ENCODE measurements at regions of chr22 and their contacts with region 1.

Region 1: DNA sequence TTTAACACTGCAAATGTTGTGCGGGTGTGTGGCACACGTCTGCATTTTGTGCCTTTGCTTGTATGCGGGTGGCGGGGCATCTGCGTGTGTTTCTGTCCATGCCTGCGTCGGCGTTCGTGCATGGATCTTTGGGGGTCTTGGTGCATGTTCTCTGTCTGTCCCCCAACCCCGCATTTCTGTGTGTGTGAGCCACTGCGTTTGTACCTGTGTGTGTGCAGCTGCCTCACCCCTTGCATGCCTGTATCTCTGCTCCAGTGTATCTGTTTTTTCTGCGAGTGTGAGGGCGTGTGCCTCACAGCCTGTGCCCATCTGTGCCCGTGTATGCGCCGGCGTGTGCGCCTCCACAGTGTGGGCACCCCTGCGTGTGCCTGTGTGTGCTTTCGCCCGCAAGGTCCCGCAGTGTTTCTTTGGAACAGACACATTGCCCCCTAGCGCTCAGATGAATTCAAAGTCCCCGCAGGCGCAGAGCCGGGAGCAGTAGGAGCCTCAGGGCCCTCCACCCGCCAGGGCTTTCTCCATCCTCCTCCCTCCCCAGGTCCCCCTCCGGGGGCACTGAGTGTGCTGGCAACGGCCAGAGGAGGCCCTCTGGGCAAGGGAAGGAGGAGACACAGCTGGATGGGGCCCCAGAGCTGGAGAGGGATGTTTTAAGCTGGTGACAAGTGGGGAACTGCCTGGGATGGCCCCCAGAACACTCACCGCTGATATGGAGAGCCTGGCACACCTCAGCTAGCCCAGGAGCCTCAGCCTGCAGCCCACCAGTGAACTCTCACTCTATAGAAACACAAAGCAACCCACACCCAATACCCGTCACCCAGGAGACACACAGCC is 3.1 kb upstream of the MN1 start:
- DNase-seq: peak; percentile 28 to 89 (median 83)
- H3K4me3 ChIP-seq: peak overlapping the region in 15 of 59 donors; percentile 4 to 30 (median 12)
- H3K27ac ChIP-seq: peak overlapping the region in 6 of 59 donors; percentile 10 to 39 (median 23)
- H3K27me3 ChIP-seq: peaks cover 0 to 12% (median 5%) of the 10 kb centered on the region in 45 donors
- CTCF ChIP-seq: peak; percentile 55 to 93 (median 82)

Region 2: DNA sequence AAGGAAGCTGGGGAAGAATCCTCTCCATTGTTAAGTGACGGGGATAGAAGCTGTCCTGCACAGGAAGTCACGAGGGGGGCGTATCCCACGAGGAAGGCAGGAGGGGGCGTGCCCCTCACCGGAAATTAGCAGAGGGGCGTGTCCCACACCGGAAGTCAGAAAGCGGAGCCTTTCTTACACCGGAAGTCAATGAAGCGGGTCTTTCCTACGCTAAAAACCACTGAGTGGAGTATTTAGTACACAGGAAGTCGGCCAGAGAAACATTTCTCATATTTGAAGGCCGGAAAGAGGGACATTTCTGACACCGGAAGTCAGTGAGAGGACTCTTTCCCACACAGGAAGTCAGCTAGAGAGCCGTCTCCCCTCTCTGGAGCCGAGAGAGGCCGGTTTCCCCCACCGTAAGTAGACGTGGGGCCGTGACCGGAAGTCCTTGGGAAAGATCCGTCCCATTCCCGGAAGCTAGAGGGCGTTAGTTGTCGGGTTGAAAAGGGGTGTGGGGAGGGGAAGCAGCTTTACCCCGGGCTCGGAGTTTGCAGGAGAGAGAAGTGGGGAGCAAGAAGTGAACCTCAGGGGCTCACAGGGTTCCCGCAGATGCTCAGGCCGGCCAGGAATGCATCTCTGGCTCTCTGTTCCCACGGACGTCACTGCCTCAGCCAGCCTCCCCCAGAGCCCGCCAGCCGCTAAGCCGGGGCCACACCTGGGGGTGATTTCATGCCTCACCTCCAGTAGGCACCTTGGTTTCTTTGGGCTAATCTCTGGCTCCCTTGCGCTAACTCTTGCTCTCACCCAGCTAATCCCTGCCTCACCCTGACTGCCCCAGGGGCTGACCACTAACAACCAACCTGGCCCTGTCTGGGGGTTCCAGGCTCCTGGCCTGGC is 1131.9 kb before region 1 on chr22:
- intact Hi-C with region 1: loop called (anchors 2 to 10 kb)
- DNase-seq: peak; percentile 64 to 92 (median 89)
- H3K4me3 ChIP-seq: peak overlapping the region; percentile 46 to 93 (median 80)
- H3K27ac ChIP-seq: peak overlapping the region; percentile 59 to 98 (median 94)
- H3K27me3 ChIP-seq: peaks cover 0 to 5% (median 0%) of the 10 kb centered on the region in 45 donors
- CTCF ChIP-seq: peak in 55 of 56 donors; percentile 37 to 81 (median 67)

Region 3: GRCh38 chr22:27405672-27406388 is 398.9 kb before region 1 on chr22:
- intact Hi-C with region 1: loop called (anchors 5 kb)
- DNase-seq: peak in 7 of 10 donors; percentile 18 to 70 (median 41)
- H3K4me3 ChIP-seq: no peak overlapping the region
- H3K27ac ChIP-seq: no peak overlapping the region
- H3K27me3 ChIP-seq: peaks cover 0 to 11% (median 0%) of the 10 kb centered on the region in 45 donors
- CTCF ChIP-seq: peak; percentile 24 to 83 (median 67)

Region 4: DNA sequence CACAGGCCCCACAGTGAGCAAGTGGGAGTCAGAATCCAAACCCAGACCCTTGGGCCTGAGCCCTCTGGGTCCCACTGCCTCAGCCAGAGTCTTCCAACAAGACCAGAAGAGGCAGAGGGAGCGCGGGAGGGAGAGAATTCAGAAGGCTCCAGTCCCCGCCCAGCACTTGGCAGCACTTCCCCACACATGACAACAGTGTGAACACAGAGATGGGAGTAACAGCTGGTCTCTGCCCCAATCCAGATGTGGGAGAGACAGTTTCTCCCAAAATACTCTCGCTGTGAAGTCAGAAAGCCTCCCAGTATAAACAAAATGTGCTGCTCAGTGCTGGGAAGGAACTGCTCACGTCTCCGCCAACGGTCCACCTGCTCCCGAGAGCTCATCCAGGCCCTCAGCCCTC is 223.0 kb before region 1 on chr22:
- intact Hi-C with region 1: loop called in 1 of 2 experiments (anchors 10 kb)
- DNase-seq: peak; percentile 14 to 92 (median 84)
- H3K4me3 ChIP-seq: peak overlapping the region in 3 of 59 donors; percentile 7 to 31 (median 10)
- H3K27ac ChIP-seq: peak overlapping the region in 54 of 59 donors; percentile 1 to 86 (median 62)
- H3K27me3 ChIP-seq: no peaks in the 10 kb centered on the region
- CTCF ChIP-seq: peak in 2 of 56 donors; percentile 14 to 16

Region 5: DNA sequence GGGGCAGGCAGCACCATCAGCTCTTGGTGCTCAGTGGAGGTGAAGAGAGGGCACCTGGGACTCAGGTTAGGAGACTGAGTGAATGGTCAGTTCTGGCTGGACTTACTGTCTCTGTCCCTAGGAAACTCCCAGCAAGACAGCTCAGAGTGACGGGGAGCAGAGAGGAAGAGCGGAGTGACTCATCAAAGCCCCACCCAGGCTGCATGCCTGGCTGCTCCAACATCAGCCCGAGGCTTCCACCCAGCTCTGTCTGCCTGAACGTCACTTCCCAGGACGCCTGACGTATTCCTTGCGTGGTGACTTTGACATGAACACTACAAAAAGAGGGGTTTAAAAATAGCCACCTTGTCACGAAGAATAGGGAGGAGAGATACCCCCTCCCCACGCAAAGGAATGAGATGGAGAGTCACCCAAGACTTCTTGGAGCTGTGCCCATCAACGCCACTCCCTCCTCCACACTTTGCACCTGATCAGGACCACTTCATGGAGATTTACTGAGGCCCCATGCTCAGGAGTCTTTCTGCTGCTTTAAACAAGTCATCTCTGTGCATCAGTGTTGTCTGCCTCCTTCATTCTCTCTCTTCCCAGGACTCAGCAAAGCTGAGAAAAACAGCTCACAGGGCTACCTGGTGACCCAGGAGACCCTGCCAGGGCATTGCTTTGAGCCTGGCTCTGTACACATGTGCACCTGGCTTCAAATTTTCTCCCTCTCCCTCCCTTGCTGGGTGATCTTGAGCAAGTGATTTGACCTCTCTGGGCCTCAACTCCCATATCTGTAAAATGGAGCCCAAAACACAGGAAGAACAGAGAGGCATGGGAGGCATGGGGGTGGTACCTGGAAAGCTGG is 86.3 kb before region 1 on chr22:
- intact Hi-C with region 1: loop called in 1 of 2 experiments (anchors 2 kb)
- DNase-seq: peak in 2 of 10 donors; percentile 25 to 62
- H3K4me3 ChIP-seq: no peak overlapping the region
- H3K27ac ChIP-seq: peak overlapping the region in 18 of 59 donors; percentile 24 to 91 (median 76)
- H3K27me3 ChIP-seq: peaks cover 0 to 11% (median 0%) of the 10 kb centered on the region in 45 donors
- CTCF ChIP-seq: no peak

Measured in dorsolateral prefrontal cortex (tissue), 120 donors.